ENCODE measurements at regions of chr11 and their contacts with region 1.

Region 1: GRCh38 chr11:76734456-76735420 is 48.4 kb upstream of the TSKU start:
- DNase-seq: no peak
- ATAC-seq: peak in 1 of 2 experiments; percentile 6; a peak in 2 of 6 replicates
- H3K4me3 ChIP-seq: no peak overlapping the region
- H3K27ac ChIP-seq: peak overlapping the region; percentile 77 to 79
- H3K4me1 ChIP-seq: peaks cover 24% of the 10 kb centered on the region
- CTCF ChIP-seq: no peak
- EP300 ChIP-seq: no peak
- POLR2A ChIP-seq: no peak
- RAD21 ChIP-seq: no peak

Region 2: DNA sequence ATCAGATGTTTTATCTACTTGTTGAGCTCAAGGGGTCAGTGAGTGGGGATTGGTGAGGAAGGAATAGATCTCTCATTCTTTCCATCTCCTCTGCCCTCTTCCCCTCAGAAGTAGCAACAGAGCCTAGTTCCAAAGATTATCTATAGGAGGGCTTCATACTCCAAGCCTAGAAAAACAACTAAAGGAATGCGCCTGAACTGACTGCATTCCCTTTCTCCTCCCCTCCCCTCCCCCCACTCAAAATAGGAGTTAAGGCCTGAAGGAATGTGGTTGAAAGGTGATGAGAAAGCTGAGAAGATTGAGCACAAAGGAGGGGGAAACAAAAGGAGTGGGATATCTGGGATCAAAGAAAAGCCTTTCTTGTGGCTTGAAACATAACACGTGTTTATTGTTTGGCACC is 279.4 kb before region 1 on chr11:
- CTCF ChIA-PET with region 1: no interaction called
- POLR2A ChIA-PET with region 1: no interaction called
- DNase-seq: no peak
- ATAC-seq: no peak
- H3K4me3 ChIP-seq: no peak overlapping the region
- H3K27ac ChIP-seq: no peak overlapping the region
- H3K4me1 ChIP-seq: peaks cover 10% of the 10 kb centered on the region; the same call in 1 of the 3 replicates
- CTCF ChIP-seq: no peak
- EP300 ChIP-seq: no peak
- POLR2A ChIP-seq: no peak
- RAD21 ChIP-seq: no peak

Region 3: DNA sequence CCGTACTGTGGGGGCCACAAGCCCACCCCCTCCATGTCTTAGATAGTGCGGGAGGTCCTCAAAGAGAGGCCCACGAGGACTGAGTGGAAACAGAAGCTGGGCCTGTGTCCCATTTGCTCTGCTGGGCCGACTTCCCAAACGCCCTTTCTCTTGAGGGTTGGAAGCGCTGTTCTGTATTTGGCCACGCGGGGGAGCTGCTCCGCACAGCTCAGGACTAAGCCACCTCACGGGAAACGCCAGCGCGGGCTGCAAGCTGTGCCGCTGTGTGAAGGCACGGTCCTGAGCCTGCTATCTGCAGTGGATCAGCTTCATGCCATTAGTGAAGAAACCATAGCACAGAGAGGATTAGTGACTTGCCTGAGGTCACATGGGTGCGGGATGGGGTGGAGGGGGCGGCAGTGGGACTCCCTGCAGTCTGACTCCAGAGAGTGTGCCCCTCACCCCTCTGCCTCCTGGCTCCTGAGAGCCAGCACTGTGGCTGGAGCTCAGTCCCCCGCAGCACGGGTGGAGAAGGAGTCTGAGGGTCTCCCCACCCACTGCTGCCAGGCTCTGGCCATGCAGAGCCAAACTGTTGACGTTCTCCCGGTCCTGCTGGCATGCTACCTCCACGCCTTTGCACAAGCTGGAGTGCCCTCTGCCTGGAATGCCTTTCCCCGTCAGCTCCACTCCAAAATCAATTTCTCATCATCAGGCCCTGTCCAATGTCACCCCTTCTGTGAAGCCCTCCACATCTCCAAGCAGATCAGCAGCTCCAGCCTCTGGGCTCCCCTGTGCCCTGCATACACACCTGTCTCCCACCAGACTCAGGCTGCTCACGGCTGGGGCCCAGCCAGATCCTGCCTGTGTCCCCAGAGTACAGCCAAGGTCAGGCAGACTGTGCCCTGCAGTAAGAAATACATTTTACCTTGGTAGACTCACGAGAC is 12.7 kb before region 1 on chr11:
- CTCF ChIA-PET with region 1: interaction called, 74 read pairs
- POLR2A ChIA-PET with region 1: no interaction called
- DNase-seq: peak; percentile 67 to 80
- ATAC-seq: peak; percentile 91 to 97
- H3K4me3 ChIP-seq: no peak overlapping the region
- H3K27ac ChIP-seq: peak overlapping the region in 1 of 2 experiments; percentile 61; a peak in 3 of 6 replicates
- H3K4me1 ChIP-seq: 0 out of 3 replicates have a peak, but pooled peaks cover 4% of the 10 kb centered on the region
- CTCF ChIP-seq: peak; percentile 83
- EP300 ChIP-seq: no peak
- POLR2A ChIP-seq: no peak
- RAD21 ChIP-seq: peak; percentile 68

Region 4: GRCh38 chr11:76768088-76768908 is 33.6 kb after region 1 on chr11:
- CTCF ChIA-PET with region 1: interaction called, 78 read pairs
- POLR2A ChIA-PET with region 1: interaction called, 5 read pairs
- DNase-seq: no peak
- ATAC-seq: no peak
- H3K4me3 ChIP-seq: peak overlapping the region; percentile 58
- H3K27ac ChIP-seq: peak overlapping the region; percentile 97 to 100
- H3K4me1 ChIP-seq: peaks cover 95% of the 10 kb centered on the region
- CTCF ChIP-seq: no peak
- EP300 ChIP-seq: no peak
- POLR2A ChIP-seq: peak; percentile 36
- RAD21 ChIP-seq: no peak

Region 5: GRCh38 chr11:76782526-76783293 is 48.0 kb after region 1 on chr11:
- CTCF ChIA-PET with region 1: interaction called, 12 read pairs
- POLR2A ChIA-PET with region 1: interaction called, 3 read pairs
- DNase-seq: peak; percentile 87 to 95
- ATAC-seq: peak; percentile 66 to 71
- H3K4me3 ChIP-seq: peak overlapping the region; percentile 71
- H3K27ac ChIP-seq: peak overlapping the region; percentile 96 to 98
- H3K4me1 ChIP-seq: peaks cover 36% of the 10 kb centered on the region
- CTCF ChIP-seq: no peak
- EP300 ChIP-seq: peak; percentile 15 to 46; a peak in 3 of 5 replicates
- POLR2A ChIP-seq: peak; percentile 57
- RAD21 ChIP-seq: peak; percentile 2 to 34; a peak in 1 of 5 replicates

Region 6: DNA sequence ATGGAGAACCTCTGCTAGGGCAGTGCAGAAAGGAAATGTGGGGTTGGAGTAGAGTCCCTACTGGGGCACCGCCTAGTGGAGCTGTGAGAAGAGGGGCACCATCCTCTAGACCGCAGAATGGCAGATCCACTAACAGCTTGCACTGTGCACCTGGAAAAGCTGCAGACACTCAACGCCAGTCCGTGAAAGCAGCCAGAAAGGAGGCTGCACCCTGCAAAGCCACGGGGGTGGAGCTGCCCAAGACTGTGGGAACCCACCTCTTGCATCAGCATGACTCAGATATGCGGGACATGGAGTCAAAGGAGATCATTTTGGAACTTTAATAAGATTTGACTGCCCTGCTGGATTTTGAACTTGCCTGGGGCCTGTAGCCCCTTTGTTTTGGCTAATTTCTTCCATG is 57.1 kb after region 1 on chr11:
- CTCF ChIA-PET with region 1: interaction called, 21 read pairs
- POLR2A ChIA-PET with region 1: interaction called, 3 read pairs
- DNase-seq: peak in 1 of 2 experiments; percentile 79
- ATAC-seq: peak in 1 of 2 experiments; percentile 35; a peak in 3 of 6 replicates
- H3K4me3 ChIP-seq: peak overlapping the region; percentile 71; the same call in 1 of the 3 replicates
- H3K27ac ChIP-seq: peak overlapping the region; percentile 96 to 98
- H3K4me1 ChIP-seq: peaks cover 100% of the 10 kb centered on the region
- CTCF ChIP-seq: no peak
- EP300 ChIP-seq: no peak
- POLR2A ChIP-seq: no peak
- RAD21 ChIP-seq: no peak

Region 7: GRCh38 chr11:76835928-76836612 is 101.3 kb after region 1 on chr11:
- CTCF ChIA-PET with region 1: interaction called, 13 read pairs
- POLR2A ChIA-PET with region 1: interaction called, 3 read pairs
- DNase-seq: peak in 1 of 2 experiments; percentile 64
- ATAC-seq: peak; percentile 9 to 73; a peak in 3 of 6 replicates
- H3K4me3 ChIP-seq: no peak overlapping the region
- H3K27ac ChIP-seq: peak overlapping the region; percentile 14 to 39; a peak in 2 of 6 replicates
- H3K4me1 ChIP-seq: peaks cover 39% of the 10 kb centered on the region
- CTCF ChIP-seq: no peak
- EP300 ChIP-seq: no peak
- POLR2A ChIP-seq: no peak
- RAD21 ChIP-seq: no peak

Measured in A549 (cell line).